Mammary epithelial cell (primary cell): ENCODE measurements at regions of chr1 and their contacts with region 1.

Region 1: GRCh38 chr1:189619682-189620332 is 857.9 kb downstream of the BRINP3 start:
- DNase-seq: peak; percentile 94
- H3K4me3 ChIP-seq: no peak overlapping the region
- H3K27ac ChIP-seq: no peak overlapping the region
- H3K4me1 ChIP-seq: peaks cover 16% of the 10 kb centered on the region
- H3K27me3 ChIP-seq: no peaks in the 10 kb centered on the region
- CTCF ChIP-seq: peak; percentile 24 to 46

Region 2: GRCh38 chr1:189654906-189655305 is 35.1 kb after region 1 on chr1:
- CTCF ChIA-PET with region 1: no interaction called
- dilution Hi-C with region 1: no loop called
- in situ Hi-C with region 1: no loop called
- intact Hi-C with region 1: loop called (anchors 5 kb)
- DNase-seq: peak; percentile 49
- H3K4me3 ChIP-seq: no peak overlapping the region
- H3K27ac ChIP-seq: no peak overlapping the region
- H3K4me1 ChIP-seq: peaks cover 36% of the 10 kb centered on the region
- H3K27me3 ChIP-seq: no peaks in the 10 kb centered on the region
- CTCF ChIP-seq: no peak

Region 3: DNA sequence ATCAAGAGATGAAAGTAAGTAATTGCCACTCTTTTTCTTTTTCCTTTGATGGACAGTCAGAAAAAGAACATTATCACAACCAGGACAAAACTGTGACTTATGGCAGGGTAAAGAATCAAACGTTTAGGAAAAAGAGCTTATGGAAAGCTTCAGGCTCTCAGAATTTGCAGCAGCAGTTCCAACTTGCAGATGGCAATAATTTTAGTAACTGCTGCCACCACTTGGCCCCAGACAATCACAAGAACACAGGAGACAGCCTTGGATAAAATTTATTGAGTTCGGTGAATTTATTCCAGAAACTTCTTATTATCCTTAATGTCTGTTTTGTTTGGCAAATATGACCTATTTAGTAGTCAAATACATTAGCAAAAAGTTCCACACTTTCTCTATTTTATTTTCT is 53.4 kb after region 1 on chr1:
- CTCF ChIA-PET with region 1: no interaction called
- dilution Hi-C with region 1: no loop called
- in situ Hi-C with region 1: no loop called
- intact Hi-C with region 1: loop called (anchors 1 kb)
- DNase-seq: no peak
- H3K4me3 ChIP-seq: no peak overlapping the region
- H3K27ac ChIP-seq: no peak overlapping the region
- H3K4me1 ChIP-seq: no peaks in the 10 kb centered on the region
- H3K27me3 ChIP-seq: no peaks in the 10 kb centered on the region
- CTCF ChIP-seq: no peak

Region 4: DNA sequence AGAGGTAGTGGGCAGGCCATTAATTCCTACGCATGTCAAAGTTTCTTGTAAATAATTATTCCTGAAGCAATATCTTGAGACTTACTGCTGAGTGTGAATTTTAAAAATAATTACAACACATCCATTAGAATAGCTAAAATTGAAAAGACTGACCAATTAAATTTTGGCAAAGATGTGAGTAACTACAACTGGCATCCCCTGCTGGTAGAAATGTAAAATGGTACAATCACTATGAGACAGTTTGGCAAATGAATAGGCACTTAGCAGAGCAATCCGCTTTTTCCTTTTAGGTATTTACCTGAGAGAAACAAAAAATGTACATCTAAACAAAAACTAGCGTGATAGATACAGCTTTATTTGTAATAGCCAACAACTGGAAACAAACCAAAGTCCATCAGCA is 59.0 kb after region 1 on chr1:
- CTCF ChIA-PET with region 1: no interaction called
- dilution Hi-C with region 1: no loop called
- in situ Hi-C with region 1: no loop called
- intact Hi-C with region 1: loop called (anchors 1 kb)
- DNase-seq: no peak
- H3K4me3 ChIP-seq: no peak overlapping the region
- H3K27ac ChIP-seq: no peak overlapping the region
- H3K4me1 ChIP-seq: no peaks in the 10 kb centered on the region
- H3K27me3 ChIP-seq: peaks cover 3% of the 10 kb centered on the region
- CTCF ChIP-seq: peak; percentile 75 to 77

Region 5: GRCh38 chr1:189790335-189790734 is 170.5 kb after region 1 on chr1:
- CTCF ChIA-PET with region 1: no interaction called
- dilution Hi-C with region 1: no loop called
- in situ Hi-C with region 1: no loop called
- intact Hi-C with region 1: no loop called
- DNase-seq: no peak
- H3K4me3 ChIP-seq: no peak overlapping the region
- H3K27ac ChIP-seq: no peak overlapping the region
- H3K4me1 ChIP-seq: no peaks in the 10 kb centered on the region
- H3K27me3 ChIP-seq: no peaks in the 10 kb centered on the region
- CTCF ChIP-seq: no peak

Region 6: DNA sequence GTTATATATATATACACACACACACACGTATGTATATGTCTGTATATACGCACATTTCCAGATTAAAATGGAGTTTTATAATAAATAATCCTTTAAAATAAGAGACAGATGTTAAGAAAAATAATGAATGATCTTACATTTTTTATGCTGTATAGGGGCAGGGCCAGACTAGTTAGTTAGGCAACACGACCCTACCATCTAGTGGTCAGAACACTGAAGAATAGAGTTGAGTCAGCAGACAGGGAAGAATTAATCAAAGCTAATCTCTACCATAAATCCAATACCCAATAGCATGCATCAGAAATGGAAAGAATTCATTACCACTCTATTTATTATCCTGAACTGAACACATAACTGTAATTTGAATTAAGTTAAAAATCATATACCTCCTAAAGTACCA is 701.1 kb after region 1 on chr1:
- CTCF ChIA-PET with region 1: no interaction called
- dilution Hi-C with region 1: no loop called
- in situ Hi-C with region 1: no loop called
- intact Hi-C with region 1: loop called (anchors 2 kb)
- DNase-seq: peak; percentile 3
- H3K4me3 ChIP-seq: no peak overlapping the region
- H3K27ac ChIP-seq: no peak overlapping the region
- H3K4me1 ChIP-seq: no peaks in the 10 kb centered on the region
- H3K27me3 ChIP-seq: no peaks in the 10 kb centered on the region
- CTCF ChIP-seq: peak; percentile 8 to 39

Region 7: DNA sequence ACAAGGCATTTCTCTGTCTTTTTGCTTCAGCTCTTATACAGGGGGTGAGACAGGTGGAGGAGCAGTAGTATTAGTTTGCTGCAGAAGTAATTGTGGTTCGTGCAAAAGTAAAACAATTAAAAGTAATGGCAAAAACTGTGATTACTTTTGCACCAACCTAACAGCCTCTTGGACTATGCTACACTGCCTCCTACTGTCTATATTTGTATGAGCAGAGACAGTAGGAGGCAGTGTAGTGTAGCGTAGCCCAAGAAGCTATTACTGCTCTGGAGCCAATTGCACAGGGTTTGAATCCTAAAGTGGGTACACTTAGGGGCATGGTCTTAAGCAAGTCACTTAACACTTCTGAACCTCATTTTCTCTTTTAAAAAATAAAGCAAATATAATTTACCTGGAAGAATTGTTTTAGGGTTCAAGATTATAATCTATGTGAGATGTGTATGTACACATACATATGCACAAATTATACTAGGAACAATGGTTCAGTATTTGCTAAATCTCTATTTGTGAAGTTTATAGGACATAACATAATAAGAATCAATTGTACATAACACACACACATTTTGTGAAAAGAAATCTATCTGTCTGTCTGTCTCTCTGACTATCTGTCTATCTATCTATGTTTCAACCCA is 754.0 kb after region 1 on chr1:
- CTCF ChIA-PET with region 1: no interaction called
- dilution Hi-C with region 1: no loop called
- in situ Hi-C with region 1: no loop called
- intact Hi-C with region 1: loop called (anchors 5 kb)
- DNase-seq: peak; percentile 9
- H3K4me3 ChIP-seq: no peak overlapping the region
- H3K27ac ChIP-seq: no peak overlapping the region
- H3K4me1 ChIP-seq: no peaks in the 10 kb centered on the region
- H3K27me3 ChIP-seq: peaks cover 2% of the 10 kb centered on the region
- CTCF ChIP-seq: peak; percentile 49 to 74